ENCODE measurements at regions of chr5 and their contacts with region 1.

Region 1: GRCh38 chr5:93800988-93801811 is 59.8 kb upstream of the POU5F2 start:
- DNase-seq: peak; percentile 53 to 90
- H3K4me3 ChIP-seq: peak overlapping the region; percentile 43
- H3K27ac ChIP-seq: peak overlapping the region; percentile 61
- H3K4me1 ChIP-seq: peaks cover 18% of the 10 kb centered on the region
- H3K27me3 ChIP-seq: no peaks in the 10 kb centered on the region
- CTCF ChIP-seq: peak; percentile 90

Region 2: GRCh38 chr5:92309336-92309991 is 1491.7 kb before region 1 on chr5:
- CTCF ChIA-PET with region 1: no interaction called
- POLR2A ChIA-PET with region 1: no interaction called
- intact Hi-C with region 1: loop called (anchors 5 kb)
- DNase-seq: peak in 1 of 2 experiments; percentile 37
- H3K4me3 ChIP-seq: no peak overlapping the region
- H3K27ac ChIP-seq: no peak overlapping the region
- H3K4me1 ChIP-seq: no peaks in the 10 kb centered on the region
- H3K27me3 ChIP-seq: no peaks in the 10 kb centered on the region
- CTCF ChIP-seq: peak; percentile 79

Region 3: DNA sequence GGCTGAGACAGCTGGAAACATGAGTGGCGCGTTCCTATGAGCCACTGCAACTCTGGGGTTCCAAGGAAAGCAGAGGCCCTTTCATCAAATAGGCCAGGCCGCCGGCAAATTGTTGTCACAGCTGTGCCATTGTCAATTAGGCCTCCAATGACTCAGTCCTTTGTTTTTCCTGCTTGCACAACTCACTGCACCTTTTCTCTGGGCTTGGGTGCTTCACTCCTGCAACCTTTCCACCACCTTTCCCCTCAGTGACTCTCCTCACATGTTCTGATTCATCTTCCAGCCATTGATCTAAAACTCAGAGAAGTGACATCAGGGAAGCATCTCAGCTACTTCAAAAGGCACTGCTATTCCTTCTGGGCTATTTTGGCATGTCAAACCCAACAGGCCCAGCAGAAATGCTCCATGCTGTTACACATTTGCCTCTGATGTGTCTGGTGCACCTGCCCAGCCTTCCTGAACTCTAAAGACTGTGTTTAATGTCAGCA is 873.9 kb before region 1 on chr5:
- CTCF ChIA-PET with region 1: no interaction called
- POLR2A ChIA-PET with region 1: no interaction called
- intact Hi-C with region 1: loop called (anchors 10 kb)
- DNase-seq: peak; percentile 56 to 77
- H3K4me3 ChIP-seq: no peak overlapping the region
- H3K27ac ChIP-seq: peak overlapping the region; percentile 44
- H3K4me1 ChIP-seq: peaks cover 17% of the 10 kb centered on the region
- H3K27me3 ChIP-seq: no peaks in the 10 kb centered on the region
- CTCF ChIP-seq: no peak

Region 4: DNA sequence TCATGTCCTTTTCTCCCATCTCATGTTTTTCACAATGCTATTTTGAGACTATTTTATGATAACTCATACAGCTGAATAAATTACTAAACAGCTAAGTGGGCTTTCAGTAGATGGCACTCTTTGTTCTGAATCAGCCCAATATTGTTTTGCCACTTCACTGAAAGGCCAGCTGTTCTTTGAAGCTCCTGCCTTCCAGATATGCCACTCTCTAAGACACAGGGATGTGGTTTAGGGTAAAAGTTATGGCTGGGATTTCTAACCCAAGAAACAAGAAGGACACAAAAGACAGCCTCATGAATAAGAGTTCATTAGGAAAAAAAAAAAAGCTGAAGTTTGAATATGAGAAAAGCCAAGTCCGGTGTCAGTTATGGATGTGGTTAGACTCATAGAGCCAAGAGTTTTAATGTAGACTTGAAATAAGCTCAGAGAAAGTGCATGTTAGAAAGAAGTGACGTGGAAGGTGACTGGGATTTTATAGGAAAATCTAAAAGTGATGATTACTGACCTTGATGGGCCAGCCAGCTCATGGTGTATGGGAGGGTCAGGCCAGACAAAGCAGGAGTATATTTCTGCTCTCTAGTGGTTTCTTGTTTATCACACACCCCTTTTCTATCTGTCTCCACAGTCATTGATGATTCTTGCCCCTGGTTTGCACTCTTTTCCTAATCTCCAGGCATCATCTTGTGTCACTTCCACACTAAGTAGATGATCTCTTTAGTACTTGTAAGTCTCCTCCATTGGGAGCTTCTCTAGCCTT is 708.7 kb before region 1 on chr5:
- CTCF ChIA-PET with region 1: no interaction called
- POLR2A ChIA-PET with region 1: no interaction called
- intact Hi-C with region 1: loop called (anchors 10 kb)
- DNase-seq: no peak
- H3K4me3 ChIP-seq: no peak overlapping the region
- H3K27ac ChIP-seq: no peak overlapping the region
- H3K4me1 ChIP-seq: peaks cover 7% of the 10 kb centered on the region; the same call in 1 of the 2 replicates
- H3K27me3 ChIP-seq: no peaks in the 10 kb centered on the region
- CTCF ChIP-seq: peak; percentile 48; the same call in 1 of the 2 replicates

Region 5: GRCh38 chr5:93596676-93597461 is 204.3 kb before region 1 on chr5:
- CTCF ChIA-PET with region 1: no interaction called
- POLR2A ChIA-PET with region 1: no interaction called
- intact Hi-C with region 1: loop called (anchors 1 kb)
- DNase-seq: peak in 1 of 2 experiments; percentile 84
- H3K4me3 ChIP-seq: no peak overlapping the region
- H3K27ac ChIP-seq: no peak overlapping the region
- H3K4me1 ChIP-seq: no peaks in the 10 kb centered on the region
- H3K27me3 ChIP-seq: no peaks in the 10 kb centered on the region
- CTCF ChIP-seq: no peak

Region 6: DNA sequence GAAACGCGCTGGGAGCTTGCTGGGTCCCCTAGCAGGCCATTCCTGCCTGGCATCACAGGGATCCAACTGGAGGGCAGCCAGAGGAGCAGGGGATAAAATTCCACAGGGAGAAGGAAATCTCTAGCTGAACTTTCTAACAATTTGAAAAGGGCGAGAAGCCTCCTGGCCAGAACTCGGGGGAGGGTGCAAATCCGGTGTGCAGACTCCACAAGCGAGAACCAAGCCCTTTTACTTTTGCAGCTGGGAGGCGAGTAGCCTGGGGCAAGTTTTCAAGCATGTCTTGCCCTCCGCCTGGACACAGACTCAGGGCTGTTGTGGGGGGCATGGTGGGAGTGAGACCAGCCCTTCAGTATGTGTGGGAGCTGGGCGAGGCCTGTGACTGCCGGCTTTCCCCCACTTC is 45.5 kb before region 1 on chr5:
- CTCF ChIA-PET with region 1: no interaction called
- POLR2A ChIA-PET with region 1: no interaction called
- intact Hi-C with region 1: no loop called
- DNase-seq: no peak
- H3K4me3 ChIP-seq: no peak overlapping the region
- H3K27ac ChIP-seq: no peak overlapping the region
- H3K4me1 ChIP-seq: no peaks in the 10 kb centered on the region
- H3K27me3 ChIP-seq: no peaks in the 10 kb centered on the region
- CTCF ChIP-seq: no peak

Region 7: GRCh38 chr5:94111209-94112004 is 310.2 kb after region 1 on chr5:
- CTCF ChIA-PET with region 1: interaction called, 12 read pairs
- POLR2A ChIA-PET with region 1: no interaction called
- intact Hi-C with region 1: no loop called
- DNase-seq: peak; percentile 92 to 95
- H3K4me3 ChIP-seq: peak overlapping the region; percentile 82
- H3K27ac ChIP-seq: peak overlapping the region; percentile 64
- H3K4me1 ChIP-seq: peaks cover 11% of the 10 kb centered on the region
- H3K27me3 ChIP-seq: no peaks in the 10 kb centered on the region
- CTCF ChIP-seq: no peak; the same call in 1 of the 2 replicates